ENCODE measurements at regions of chr11 and their contacts with region 1.

Region 1: DNA sequence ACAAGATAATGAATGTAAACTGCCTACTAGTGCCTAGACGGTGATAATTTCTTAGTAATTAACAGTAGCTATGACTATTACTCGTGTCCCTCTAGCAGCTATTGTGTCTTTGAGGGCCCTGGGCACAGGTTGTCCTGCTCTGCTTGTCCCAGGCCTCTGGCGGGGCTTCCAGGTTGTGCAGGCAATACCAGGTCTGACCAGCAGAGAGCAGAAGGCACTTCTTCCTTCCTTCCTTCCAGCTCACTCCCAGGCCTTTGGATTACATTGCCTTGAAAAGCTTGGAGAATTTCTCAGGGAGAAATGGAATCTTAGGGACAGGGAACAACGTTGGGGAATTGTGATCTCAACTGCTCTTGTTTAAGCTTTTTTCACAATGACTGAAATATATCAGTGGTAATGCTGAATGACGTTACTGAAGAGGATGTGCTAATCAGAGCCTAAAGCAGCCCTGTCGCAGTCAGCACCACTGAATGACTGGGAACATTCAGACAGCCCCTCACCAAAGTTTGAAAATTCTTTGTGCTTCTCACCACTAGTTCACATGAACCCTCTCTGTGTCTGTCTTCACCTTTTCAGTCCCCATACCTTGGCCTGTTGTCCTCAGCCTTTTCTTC is 8.4 kb upstream of the CCKBR start:
- DNase-seq: peak; percentile 64 to 90
- H3K4me3 ChIP-seq: no peak overlapping the region
- H3K27ac ChIP-seq: no peak overlapping the region
- H3K4me1 ChIP-seq: no peaks in the 10 kb centered on the region
- H3K27me3 ChIP-seq: peaks cover 0 to 3% (median under 1%) of the 10 kb centered on the region in 4 experiments; a peak in 1 of 7 replicates
- CTCF ChIP-seq: peak; percentile 91 to 99 (median 97)
- EP300 ChIP-seq: no peak
- POLR2A ChIP-seq: no peak
- RAD21 ChIP-seq: peak; percentile 84 to 86

Region 2: DNA sequence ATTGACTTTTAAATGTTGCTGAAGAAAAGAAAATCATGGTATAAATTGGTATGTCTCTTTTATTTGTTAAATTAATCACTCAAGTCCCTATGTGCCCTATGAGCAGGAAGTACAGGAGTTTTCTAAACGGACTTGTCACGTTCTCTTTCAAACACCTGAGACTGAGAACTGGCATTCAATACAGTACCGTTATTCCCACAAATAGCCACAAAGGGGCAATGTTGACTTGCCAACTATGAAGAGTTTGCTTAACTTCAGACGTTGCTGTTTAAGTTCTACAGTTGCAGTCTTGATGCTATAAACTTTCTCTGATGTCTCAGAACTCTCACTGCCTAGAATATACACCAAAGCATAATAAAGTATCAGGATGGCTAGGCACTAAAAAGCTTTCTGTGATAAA is 228.3 kb before region 1 on chr11:
- CTCF ChIA-PET with region 1: interaction called, 27 read pairs
- POLR2A ChIA-PET with region 1: no interaction called
- DNase-seq: no peak
- H3K4me3 ChIP-seq: no peak overlapping the region
- H3K27ac ChIP-seq: no peak overlapping the region
- H3K4me1 ChIP-seq: no peaks in the 10 kb centered on the region
- H3K27me3 ChIP-seq: no peaks in the 10 kb centered on the region
- CTCF ChIP-seq: peak in 2 of 3 experiments; percentile 70 to 81; a peak in 3 of 4 replicates
- EP300 ChIP-seq: no peak
- POLR2A ChIP-seq: no peak
- RAD21 ChIP-seq: peak; percentile 95 to 97

Region 3: GRCh38 chr11:6234387-6235107 is 16.7 kb before region 1 on chr11 and contains the start of gene FHIP1B:
- CTCF ChIA-PET with region 1: interaction called, 57 read pairs
- POLR2A ChIA-PET with region 1: no interaction called
- DNase-seq: peak; percentile 97 to 100
- H3K4me3 ChIP-seq: peak within 1 kb of the TSS; percentile 88 to 98 (median 94)
- H3K27ac ChIP-seq: peak within 1 kb of the TSS; percentile 61
- H3K4me1 ChIP-seq: peaks cover 0 to 5% (median 2%) of the 10 kb centered on the region in 4 experiments; a peak in 2 of 7 replicates
- H3K27me3 ChIP-seq: 0 out of 7 replicates have a peak, but pooled peaks cover 0 to 2% (median 0%) of the 10 kb centered on the region in 4 experiments
- CTCF ChIP-seq: no peak
- EP300 ChIP-seq: no peak
- POLR2A ChIP-seq: no peak
- RAD21 ChIP-seq: no peak
- total RNA-seq, gene FHIP1B: 16.8 TPM in 2 replicates

Region 4: GRCh38 chr11:6269994-6270393 is 18.8 kb after region 1 on chr11:
- CTCF ChIA-PET with region 1: interaction called, 112 read pairs
- POLR2A ChIA-PET with region 1: no interaction called
- DNase-seq: peak in 1 of 2 experiments; percentile 69
- H3K4me3 ChIP-seq: no peak overlapping the region
- H3K27ac ChIP-seq: no peak overlapping the region
- H3K4me1 ChIP-seq: peaks cover 0 to 4% (median 0%) of the 10 kb centered on the region in 4 experiments; a peak in 1 of 7 replicates
- H3K27me3 ChIP-seq: peaks cover 0 to 2% (median 0%) of the 10 kb centered on the region in 4 experiments; a peak in 1 of 7 replicates
- CTCF ChIP-seq: peak; percentile 63 to 88 (median 69)
- EP300 ChIP-seq: no peak
- POLR2A ChIP-seq: no peak
- RAD21 ChIP-seq: peak; percentile 50 to 63

Region 5: GRCh38 chr11:6298605-6299004 is 47.4 kb after region 1 on chr11:
- CTCF ChIA-PET with region 1: interaction called, 166 read pairs
- POLR2A ChIA-PET with region 1: interaction called, 4 read pairs
- DNase-seq: peak in 1 of 2 experiments; percentile 81
- H3K4me3 ChIP-seq: no peak overlapping the region
- H3K27ac ChIP-seq: no peak overlapping the region
- H3K4me1 ChIP-seq: peaks cover 1 to 7% (median 2%) of the 10 kb centered on the region in 4 experiments; a peak in 5 of 7 replicates
- H3K27me3 ChIP-seq: no peaks in the 10 kb centered on the region; a peak in 1 of 7 replicates
- CTCF ChIP-seq: peak; percentile 100
- EP300 ChIP-seq: no peak
- POLR2A ChIP-seq: no peak
- RAD21 ChIP-seq: peak; percentile 72 to 86

Region 6: GRCh38 chr11:6315811-6316425 is 64.7 kb after region 1 on chr11:
- CTCF ChIA-PET with region 1: interaction called, 124 read pairs
- POLR2A ChIA-PET with region 1: interaction called, 3 read pairs
- DNase-seq: peak in 1 of 2 experiments; percentile 65
- H3K4me3 ChIP-seq: no peak overlapping the region
- H3K27ac ChIP-seq: no peak overlapping the region
- H3K4me1 ChIP-seq: peaks cover 2 to 24% (median 16%) of the 10 kb centered on the region in 4 experiments
- H3K27me3 ChIP-seq: peaks cover 0 to 3% (median 1%) of the 10 kb centered on the region in 4 experiments; a peak in 1 of 7 replicates
- CTCF ChIP-seq: peak; percentile 92 to 97 (median 96)
- EP300 ChIP-seq: no peak
- POLR2A ChIP-seq: no peak
- RAD21 ChIP-seq: peak; percentile 92 to 95

Measured in H1 (cell line).